Heart right ventricle (tissue), 16 donors: ENCODE measurements at regions of chr6 and their contacts with region 1.

Region 1: GRCh38 chr6:79233611-79234149 is 802 bp downstream of the HMGN3 start:
- DNase-seq: peak; percentile 89 to 91
- ATAC-seq: peak; percentile 92 to 98 (median 96)
- H3K4me3 ChIP-seq: peak overlapping the region; percentile 50 to 81 (median 72)
- H3K27ac ChIP-seq: peak overlapping the region; percentile 79 to 97 (median 94)
- H3K4me1 ChIP-seq: peaks cover 0 to 34% (median 23%) of the 10 kb centered on the region in 9 donors
- H3K27me3 ChIP-seq: no peaks in the 10 kb centered on the region
- CTCF ChIP-seq: peak; percentile 14 to 57 (median 42)

Region 2: DNA sequence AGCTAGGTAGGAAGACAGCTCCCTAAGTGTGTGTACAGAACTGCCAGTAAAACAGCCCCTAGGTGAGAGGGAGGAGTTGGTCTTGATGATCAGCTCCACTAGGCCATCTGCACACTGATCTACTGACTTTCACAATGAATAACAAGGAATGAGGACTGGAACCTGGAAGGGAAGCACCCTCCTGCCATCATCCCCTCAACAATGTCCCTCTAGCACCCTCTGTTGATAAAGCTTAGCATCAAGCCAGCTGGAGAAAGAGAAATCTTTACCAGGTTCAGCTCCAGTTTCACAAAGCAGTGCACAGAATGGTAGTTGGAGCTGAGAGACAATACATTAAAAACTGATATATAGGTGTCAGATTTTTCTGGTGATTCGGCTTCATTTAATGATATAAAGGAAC is 423.5 kb before region 1 on chr6:
- intact Hi-C with region 1: no loop called
- DNase-seq: no peak
- ATAC-seq: no peak
- H3K4me3 ChIP-seq: no peak overlapping the region
- H3K27ac ChIP-seq: no peak overlapping the region
- H3K4me1 ChIP-seq: no peaks in the 10 kb centered on the region
- H3K27me3 ChIP-seq: no peaks in the 10 kb centered on the region
- CTCF ChIP-seq: peak in 5 of 9 donors; percentile 6 to 29 (median 11)

Region 3: GRCh38 chr6:79078075-79079025 is 155.3 kb before region 1 on chr6 and contains the start of gene PHIP:
- intact Hi-C with region 1: loop called in 7 of 10 experiments (anchors 1 to 5 kb)
- DNase-seq: peak; percentile 93 to 95
- ATAC-seq: peak; percentile 91 to 98 (median 94)
- H3K4me3 ChIP-seq: peak within 1 kb of the TSS; percentile 82 to 92 (median 88)
- H3K27ac ChIP-seq: peak within 1 kb of the TSS; percentile 94 to 99 (median 98)
- H3K4me1 ChIP-seq: peaks cover 0 to 43% (median 40%) of the 10 kb centered on the region in 9 donors
- H3K27me3 ChIP-seq: no peaks in the 10 kb centered on the region
- CTCF ChIP-seq: peak in 2 of 9 donors; percentile 5 to 10
- total RNA-seq, gene PHIP: 10.6 to 17.3 (median 16.1) TPM

Region 4: DNA sequence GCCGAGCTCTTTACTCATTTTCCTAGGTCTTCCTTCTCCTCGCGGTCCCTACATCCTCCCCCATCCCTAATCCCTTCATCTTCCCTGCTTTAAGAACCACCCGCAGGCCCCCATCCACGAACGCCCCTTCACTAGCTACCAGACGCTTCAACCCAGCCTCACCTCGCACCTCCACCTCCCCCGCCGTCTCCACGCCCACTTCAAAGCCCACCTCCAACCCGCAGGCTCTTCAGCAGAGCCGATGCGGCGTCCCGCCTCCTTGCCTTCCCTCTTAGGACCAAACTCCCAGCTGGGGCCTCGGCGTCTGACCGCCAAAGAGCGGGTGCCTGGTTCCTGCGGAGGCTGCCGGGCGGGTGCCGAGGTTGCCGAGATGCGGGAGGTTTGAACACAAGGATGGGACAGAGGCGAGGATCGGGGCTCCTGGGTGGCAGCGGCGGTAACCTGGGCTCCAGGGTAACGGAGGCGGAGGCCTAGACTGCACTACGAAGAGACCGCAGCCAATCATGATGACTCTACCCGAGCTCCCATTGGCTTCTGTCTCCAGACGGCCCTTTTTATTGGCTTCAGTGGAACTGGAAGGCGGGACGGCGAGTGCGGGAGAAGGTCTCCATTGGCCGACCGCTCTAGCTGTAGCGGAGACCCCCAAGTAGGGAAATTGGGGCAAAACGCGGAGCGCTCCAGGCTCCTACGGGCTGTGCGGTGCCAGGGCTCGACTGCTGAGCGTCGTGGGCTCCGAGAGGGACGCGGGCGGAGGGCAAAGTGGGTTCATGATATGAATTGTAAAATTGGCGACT is 303.5 kb after region 1 on chr6 and contains the start of gene LCA5:
- intact Hi-C with region 1: loop called in 6 of 10 experiments (anchors 5 to 10 kb)
- DNase-seq: peak; percentile 88 to 95
- ATAC-seq: peak; percentile 98 to 100 (median 99)
- H3K4me3 ChIP-seq: peak within 1 kb of the TSS; percentile 58 to 94 (median 78)
- H3K27ac ChIP-seq: peak within 1 kb of the TSS; percentile 57 to 93 (median 88)
- H3K4me1 ChIP-seq: peaks cover 0 to 31% (median 18%) of the 10 kb centered on the region in 9 donors
- H3K27me3 ChIP-seq: no peaks in the 10 kb centered on the region
- CTCF ChIP-seq: no peak
- total RNA-seq, gene LCA5: 1.4 to 2.7 (median 2.2) TPM

Region 5: DNA sequence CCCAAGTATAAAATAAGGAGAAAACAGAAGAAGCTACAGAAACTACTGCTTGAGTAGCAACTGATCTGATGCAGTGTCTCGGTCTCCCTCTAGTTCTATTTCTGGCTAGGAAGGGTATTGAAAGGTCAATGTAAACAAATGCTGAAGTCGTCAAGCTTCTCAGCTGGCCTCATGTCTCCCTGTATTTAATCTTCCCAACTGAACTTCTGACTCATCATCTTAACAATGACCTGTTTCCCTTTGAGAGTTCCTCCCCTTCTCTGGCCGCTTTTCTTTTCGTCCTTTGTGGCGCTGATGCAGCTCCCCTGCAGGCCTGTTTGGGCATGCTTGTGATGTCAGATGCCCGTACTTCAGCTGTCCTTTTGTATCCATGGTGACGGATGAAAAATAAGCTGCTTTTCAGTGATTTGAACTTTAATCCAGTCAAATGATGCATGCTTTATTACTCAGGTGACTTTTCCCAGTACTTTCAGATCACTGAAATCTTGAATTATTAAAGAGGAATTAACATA is 311.3 kb after region 1 on chr6:
- intact Hi-C with region 1: loop called in 3 of 10 experiments (anchors 10 kb)
- DNase-seq: peak; percentile 44 to 77
- ATAC-seq: peak; percentile 86 to 97 (median 93)
- H3K4me3 ChIP-seq: peak overlapping the region in 6 of 10 donors; percentile 16 to 35 (median 23)
- H3K27ac ChIP-seq: peak overlapping the region in 9 of 10 donors; percentile 37 to 70 (median 52)
- H3K4me1 ChIP-seq: peaks cover 4 to 34% (median 26%) of the 10 kb centered on the region in 9 donors
- H3K27me3 ChIP-seq: no peaks in the 10 kb centered on the region
- CTCF ChIP-seq: peak in 8 of 9 donors; percentile 45 to 71 (median 55)

Region 6: DNA sequence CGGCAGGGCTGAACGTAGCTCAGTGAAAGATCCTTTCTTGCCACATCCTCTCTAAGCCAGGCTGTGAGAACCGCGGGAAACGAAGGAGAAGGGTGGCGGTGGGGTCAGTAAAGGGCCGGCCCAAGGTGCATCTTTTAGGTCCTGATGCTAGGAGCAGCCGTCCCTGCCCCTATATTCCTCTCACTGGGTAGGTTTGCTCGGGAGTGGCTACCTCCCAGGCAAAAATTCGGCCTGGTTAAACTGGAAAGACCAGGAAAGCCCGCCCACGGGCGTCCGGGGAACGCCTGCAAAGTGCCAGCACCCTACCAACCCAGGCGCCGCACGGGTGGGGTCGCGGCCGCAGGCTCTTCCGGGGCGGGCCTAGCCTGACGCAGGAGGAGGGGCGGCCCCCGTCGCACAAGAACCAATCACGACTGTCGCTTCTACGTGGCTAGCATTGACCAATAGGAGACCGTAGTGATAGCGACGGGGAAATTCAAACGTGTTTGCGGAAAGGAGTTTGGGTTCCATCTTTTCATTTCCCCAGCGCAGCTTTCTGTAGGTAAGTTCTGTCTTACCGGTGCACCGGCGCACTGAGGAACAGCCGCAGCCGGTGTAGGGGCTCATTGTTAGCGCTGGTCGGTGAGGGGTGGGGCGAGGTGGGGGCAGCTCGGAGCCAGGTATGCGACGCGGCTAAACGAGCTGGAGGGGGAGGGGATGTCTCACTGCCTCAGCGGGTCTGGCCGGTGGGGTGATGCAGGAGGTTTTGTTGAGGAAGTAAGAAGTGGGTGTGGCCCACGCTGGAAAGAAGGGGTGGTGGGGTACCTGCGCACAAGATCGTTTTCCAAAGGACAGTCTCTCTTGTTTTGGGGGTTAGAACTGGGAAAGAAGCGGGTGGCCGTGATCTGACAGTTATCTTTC is 770.7 kb after region 1 on chr6 and contains the start of gene TTK:
- intact Hi-C with region 1: loop called in 1 of 10 experiments (anchors 10 kb)
- DNase-seq: peak; percentile 90 to 92
- ATAC-seq: peak; percentile 100
- H3K4me3 ChIP-seq: peak within 1 kb of the TSS; percentile 48 to 82 (median 68)
- H3K27ac ChIP-seq: peak within 1 kb of the TSS in 9 of 10 donors; percentile 62 to 92 (median 86)
- H3K4me1 ChIP-seq: peaks cover 0 to 16% (median 12%) of the 10 kb centered on the region in 9 donors
- H3K27me3 ChIP-seq: no peaks in the 10 kb centered on the region
- CTCF ChIP-seq: no peak
- total RNA-seq, gene TTK: 0.19 to 3.4 (median 0.41) TPM in 8 of 10 donors, not detected in the others